A549 (cell line): ENCODE measurements at regions of chr7 and their contacts with region 1.

Region 1: GRCh38 chr7:70829221-70830059 is 302.5 kb upstream of the GALNT17 start:
- DNase-seq: peak; percentile 47 to 53
- ATAC-seq: peak; percentile 95
- H3K4me3 ChIP-seq: no peak overlapping the region
- H3K27ac ChIP-seq: no peak overlapping the region
- H3K4me1 ChIP-seq: no peaks in the 10 kb centered on the region
- CTCF ChIP-seq: peak; percentile 63
- EP300 ChIP-seq: no peak
- POLR2A ChIP-seq: no peak
- RAD21 ChIP-seq: peak; percentile 81 to 83

Region 2: DNA sequence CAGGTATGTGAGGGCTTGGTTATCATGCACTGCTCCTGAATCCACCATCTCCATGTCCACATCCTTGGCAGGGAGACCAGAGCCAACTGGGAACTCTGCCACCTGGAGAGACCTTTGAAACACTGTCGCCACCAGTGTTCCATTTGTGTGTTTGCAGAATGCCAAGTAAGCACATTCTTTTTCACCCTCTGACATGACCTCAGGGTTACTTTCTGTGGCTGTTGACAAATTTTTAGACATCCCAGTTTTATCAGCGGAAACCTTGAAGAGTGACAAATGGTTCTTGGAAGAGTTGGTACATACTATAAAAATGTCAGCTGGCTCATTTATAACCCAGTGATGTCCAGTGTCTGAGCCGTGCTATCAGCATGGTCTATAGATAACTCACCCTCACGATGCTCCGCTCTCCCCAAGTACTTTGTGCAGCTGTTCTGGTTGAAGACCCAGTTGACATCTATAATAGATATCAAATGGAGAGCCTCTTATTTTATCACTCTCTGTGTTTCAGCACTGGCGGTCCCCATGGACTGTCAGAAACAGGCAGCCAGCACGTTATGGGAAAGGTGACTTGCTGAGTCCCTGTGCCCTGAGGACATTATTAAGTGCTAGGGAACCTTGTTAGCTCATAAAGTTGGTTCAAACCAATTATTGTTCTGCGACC is 260.6 kb before region 1 on chr7:
- CTCF ChIA-PET with region 1: no interaction called
- POLR2A ChIA-PET with region 1: no interaction called
- DNase-seq: no peak
- ATAC-seq: no peak
- H3K4me3 ChIP-seq: no peak overlapping the region
- H3K27ac ChIP-seq: no peak overlapping the region
- H3K4me1 ChIP-seq: peaks cover 21% of the 10 kb centered on the region
- CTCF ChIP-seq: no peak
- EP300 ChIP-seq: no peak
- POLR2A ChIP-seq: no peak
- RAD21 ChIP-seq: no peak

Region 3: DNA sequence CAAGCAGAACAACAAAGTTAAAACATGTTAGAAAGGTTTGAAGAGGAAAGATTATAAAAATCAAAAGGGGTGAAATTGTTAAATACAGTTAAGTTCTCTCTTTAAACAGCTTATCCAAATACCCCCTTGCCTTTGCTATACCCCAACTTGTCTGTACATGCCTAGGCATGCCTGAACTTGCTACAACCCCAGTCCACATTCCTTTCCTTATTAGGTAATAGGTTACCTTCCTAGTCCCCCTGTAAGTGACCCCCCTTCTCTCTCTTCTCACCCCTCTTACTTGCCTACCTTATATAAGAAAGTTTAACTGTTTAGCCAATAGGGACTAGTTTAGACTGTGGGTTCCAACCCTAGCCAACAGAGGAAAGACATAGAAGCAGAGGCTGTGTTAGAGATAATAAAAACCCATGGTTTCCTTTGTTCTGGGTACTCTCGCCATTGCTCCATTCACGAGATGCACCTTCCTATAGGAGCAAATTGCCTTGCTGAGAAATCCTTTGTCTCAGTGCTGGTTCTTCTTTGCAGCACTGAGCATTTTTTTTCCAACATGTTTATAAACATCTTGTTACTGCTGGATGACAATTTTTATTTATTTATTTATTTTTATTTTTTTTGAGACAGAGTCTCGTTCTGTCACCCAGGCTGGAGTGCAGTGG is 20.3 kb after region 1 on chr7:
- CTCF ChIA-PET with region 1: interaction called, 11 read pairs
- POLR2A ChIA-PET with region 1: no interaction called
- DNase-seq: no peak
- ATAC-seq: no peak
- H3K4me3 ChIP-seq: no peak overlapping the region
- H3K27ac ChIP-seq: no peak overlapping the region
- H3K4me1 ChIP-seq: no peaks in the 10 kb centered on the region
- CTCF ChIP-seq: no peak
- EP300 ChIP-seq: no peak
- POLR2A ChIP-seq: no peak
- RAD21 ChIP-seq: no peak

Region 4: GRCh38 chr7:70856866-70857630 is 27.6 kb after region 1 on chr7:
- CTCF ChIA-PET with region 1: interaction called, 11 read pairs
- POLR2A ChIA-PET with region 1: no interaction called
- DNase-seq: peak; percentile 40 to 50
- ATAC-seq: peak in 1 of 2 experiments; percentile 40; a peak in 1 of 6 replicates
- H3K4me3 ChIP-seq: no peak overlapping the region
- H3K27ac ChIP-seq: no peak overlapping the region
- H3K4me1 ChIP-seq: no peaks in the 10 kb centered on the region
- CTCF ChIP-seq: peak; percentile 66
- EP300 ChIP-seq: no peak
- POLR2A ChIP-seq: no peak
- RAD21 ChIP-seq: peak; percentile 73 to 85

Region 5: DNA sequence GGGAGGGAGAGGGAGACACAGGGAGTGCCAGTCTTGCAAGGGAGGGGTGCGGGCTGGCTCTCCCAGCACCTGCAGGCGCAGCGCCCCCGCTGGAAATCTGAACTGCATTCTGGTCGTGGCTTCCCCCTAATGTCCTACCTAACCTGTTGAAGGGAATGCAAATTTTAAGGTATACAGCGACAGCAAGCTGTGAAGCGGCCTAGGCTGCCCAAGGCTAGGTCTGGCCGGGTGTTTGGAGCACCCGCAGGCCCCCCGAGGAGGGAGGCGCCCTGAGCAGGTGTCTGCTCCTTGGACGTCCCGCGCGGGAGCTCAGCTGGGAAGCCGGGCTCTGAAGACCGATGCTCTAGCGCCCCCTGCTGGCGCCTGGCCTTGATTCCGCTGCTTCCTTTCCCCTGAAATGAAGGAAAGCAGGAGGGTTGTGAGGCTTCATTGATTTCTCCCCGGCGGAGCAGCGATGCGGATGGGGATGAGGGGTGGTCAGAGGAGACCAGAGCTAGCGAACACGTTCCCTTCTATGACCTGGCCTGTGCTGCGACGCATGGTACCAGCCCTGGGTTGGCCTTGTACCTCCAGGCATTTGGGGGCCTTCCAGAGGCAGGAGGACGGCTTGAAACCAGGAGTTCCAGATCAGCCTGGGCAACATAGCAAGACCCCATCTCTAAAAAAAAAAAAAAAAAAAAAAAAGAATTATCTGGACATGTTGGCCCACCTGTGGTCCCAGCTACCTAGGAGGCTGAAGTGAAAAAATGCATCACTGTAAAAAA is 903.8 kb after region 1 on chr7:
- CTCF ChIA-PET with region 1: interaction called, 84 read pairs
- POLR2A ChIA-PET with region 1: no interaction called
- DNase-seq: peak; percentile 44 to 63
- ATAC-seq: peak; percentile 77 to 83
- H3K4me3 ChIP-seq: no peak overlapping the region
- H3K27ac ChIP-seq: no peak overlapping the region
- H3K4me1 ChIP-seq: no peaks in the 10 kb centered on the region
- CTCF ChIP-seq: peak; percentile 63
- EP300 ChIP-seq: no peak
- POLR2A ChIP-seq: no peak
- RAD21 ChIP-seq: peak; percentile 77 to 82